Sigmoid colon (tissue), 7 donors: ENCODE measurements at regions of chr2 and their contacts with region 1.

Region 1: GRCh38 chr2:73926493-73927338 is at the start of gene DGUOK:
- DNase-seq: peak; percentile 99
- H3K4me3 ChIP-seq: peak within 1 kb of the TSS; percentile 63 to 76 (median 71)
- H3K27ac ChIP-seq: peak within 1 kb of the TSS; percentile 93 to 96 (median 94)
- H3K4me1 ChIP-seq: peaks cover 0 to 41% (median 32%) of the 10 kb centered on the region in 4 donors
- H3K27me3 ChIP-seq: no peaks in the 10 kb centered on the region
- CTCF ChIP-seq: no peak
- EP300 ChIP-seq: peak in 1 of 4 donors; percentile 73
- POLR2A ChIP-seq: peak; percentile 91 to 92
- total RNA-seq, gene DGUOK: 31.6 to 48.1 (median 39.3) TPM

Region 2: GRCh38 chr2:73337828-73338227 is 588.9 kb before region 1 on chr2:
- intact Hi-C with region 1: no loop called
- DNase-seq: no peak
- H3K4me3 ChIP-seq: no peak overlapping the region
- H3K27ac ChIP-seq: no peak overlapping the region
- H3K4me1 ChIP-seq: no peaks in the 10 kb centered on the region
- H3K27me3 ChIP-seq: no peaks in the 10 kb centered on the region
- CTCF ChIP-seq: no peak
- EP300 ChIP-seq: no peak
- POLR2A ChIP-seq: no peak

Region 3: GRCh38 chr2:73970850-73971471 is 44.2 kb after region 1 on chr2:
- intact Hi-C with region 1: no loop called
- DNase-seq: peak; percentile 79
- H3K4me3 ChIP-seq: no peak overlapping the region
- H3K27ac ChIP-seq: peak overlapping the region in 3 of 4 donors; percentile 29 to 56 (median 39)
- H3K4me1 ChIP-seq: peaks cover 0 to 18% (median 16%) of the 10 kb centered on the region in 4 donors
- H3K27me3 ChIP-seq: no peaks in the 10 kb centered on the region
- CTCF ChIP-seq: no peak
- EP300 ChIP-seq: no peak
- POLR2A ChIP-seq: no peak

Region 4: GRCh38 chr2:73985308-73986084 is 58.8 kb after region 1 on chr2:
- intact Hi-C with region 1: loop called (anchors 2 kb)
- DNase-seq: peak; percentile 72
- H3K4me3 ChIP-seq: peak overlapping the region; percentile 41 to 73 (median 63)
- H3K27ac ChIP-seq: peak overlapping the region; percentile 57 to 73 (median 65)
- H3K4me1 ChIP-seq: peaks cover 0 to 62% (median 50%) of the 10 kb centered on the region in 4 donors
- H3K27me3 ChIP-seq: peaks cover 0 to 2% (median 0%) of the 10 kb centered on the region in 3 donors
- CTCF ChIP-seq: no peak
- EP300 ChIP-seq: no peak
- POLR2A ChIP-seq: no peak

Region 5: DNA sequence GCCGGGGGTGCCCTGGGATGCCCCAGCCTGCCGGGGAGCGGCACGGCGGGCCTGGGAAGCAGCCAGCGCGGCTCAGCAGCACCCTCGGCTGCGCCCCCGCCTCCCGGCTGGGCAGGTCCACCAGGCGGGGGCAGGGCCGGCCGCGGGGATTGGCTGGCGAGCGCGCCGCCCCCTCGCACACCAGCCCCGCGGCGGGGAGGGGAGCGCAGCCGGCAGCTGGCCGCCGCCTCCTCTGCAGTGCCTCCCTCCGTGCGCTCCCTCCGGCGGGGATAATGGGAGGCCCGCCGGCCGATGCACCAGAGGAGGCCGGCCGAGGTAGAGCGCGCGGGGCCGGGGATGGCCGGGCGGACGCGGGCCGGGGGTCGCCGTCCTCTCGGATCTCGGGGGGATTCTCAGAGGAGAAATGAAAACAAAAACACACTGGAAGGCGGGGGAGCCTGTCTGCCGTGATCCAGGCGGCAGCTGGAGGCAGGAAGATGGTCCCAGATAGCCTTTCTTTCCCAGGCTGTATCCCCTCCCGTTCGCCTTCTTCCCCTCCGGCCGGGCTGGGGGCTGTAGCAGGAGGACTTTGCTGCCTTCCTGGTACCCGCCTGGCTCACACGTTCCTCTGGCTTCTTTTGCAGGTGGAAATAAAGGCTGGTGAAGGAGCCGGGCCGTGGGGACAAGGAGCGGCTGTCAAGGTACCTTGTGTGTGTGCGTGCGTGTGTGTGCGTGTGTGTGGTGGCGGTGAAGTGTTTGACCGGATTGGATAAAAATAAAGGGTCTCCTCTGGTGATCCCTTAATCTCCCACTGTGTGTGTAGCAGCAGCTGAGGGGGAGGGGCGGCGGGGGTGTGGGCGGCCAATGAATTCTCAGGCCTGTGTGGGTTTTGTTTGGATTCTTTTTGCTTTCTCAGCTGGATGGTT is 76.0 kb after region 1 on chr2:
- intact Hi-C with region 1: loop called (anchors 5 kb)
- DNase-seq: peak; percentile 90
- H3K4me3 ChIP-seq: peak overlapping the region; percentile 43 to 74 (median 56)
- H3K27ac ChIP-seq: peak overlapping the region; percentile 62 to 77 (median 68)
- H3K4me1 ChIP-seq: peaks cover 0 to 63% (median 51%) of the 10 kb centered on the region in 4 donors
- H3K27me3 ChIP-seq: no peaks in the 10 kb centered on the region
- CTCF ChIP-seq: peak in 1 of 4 experiments; percentile 7
- EP300 ChIP-seq: no peak
- POLR2A ChIP-seq: peak in 1 of 2 donors; percentile 22

Region 6: GRCh38 chr2:74025971-74026612 is 99.4 kb after region 1 on chr2:
- intact Hi-C with region 1: no loop called
- DNase-seq: no peak
- H3K4me3 ChIP-seq: no peak overlapping the region
- H3K27ac ChIP-seq: no peak overlapping the region
- H3K4me1 ChIP-seq: no peaks in the 10 kb centered on the region
- H3K27me3 ChIP-seq: no peaks in the 10 kb centered on the region
- CTCF ChIP-seq: no peak
- EP300 ChIP-seq: no peak
- POLR2A ChIP-seq: no peak

Region 7: DNA sequence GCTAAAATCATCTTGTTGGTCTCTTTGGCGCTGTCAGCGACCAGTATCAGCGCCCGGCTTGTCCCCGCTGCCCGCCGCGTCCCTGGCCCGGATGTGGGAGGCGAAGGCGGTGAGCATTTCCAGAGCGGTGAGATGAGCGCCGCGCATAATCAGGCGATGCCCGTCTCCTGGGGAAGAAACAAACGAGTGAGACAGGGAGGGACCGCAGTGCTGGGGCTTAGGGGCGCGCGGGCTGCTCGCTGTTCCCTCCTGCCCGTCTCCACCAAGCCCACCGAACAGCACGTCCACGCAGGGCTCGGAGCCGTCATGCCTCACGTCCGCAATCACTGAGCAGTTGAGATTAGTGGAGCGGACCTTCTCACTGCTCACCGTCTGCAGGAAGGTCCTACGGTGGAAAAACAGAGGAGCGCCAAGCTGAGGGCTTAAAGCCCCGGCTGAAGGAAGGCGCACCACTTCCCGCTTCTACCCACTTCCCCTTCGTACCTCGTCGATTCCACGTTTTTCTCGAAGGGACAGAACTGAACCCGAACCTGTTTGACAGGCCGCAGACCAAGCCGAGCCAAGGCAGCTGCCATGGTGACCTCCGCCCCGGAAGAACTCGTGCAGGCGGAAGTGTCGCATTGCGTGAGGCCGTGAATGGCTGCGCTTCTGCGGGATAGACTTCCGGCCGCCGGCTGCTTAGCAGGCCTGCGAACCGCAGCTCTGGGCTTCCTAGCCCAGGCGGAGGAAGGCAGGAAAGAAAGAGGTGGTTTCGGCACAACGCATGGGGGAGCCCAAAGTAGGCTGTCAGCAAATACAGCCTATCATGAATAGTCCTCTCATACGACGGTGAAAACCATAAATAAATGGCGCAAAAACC is 545.6 kb after region 1 on chr2 and contains the start of gene MRPL53:
- intact Hi-C with region 1: loop called (anchors 10 kb)
- DNase-seq: peak; percentile 96
- H3K4me3 ChIP-seq: peak within 1 kb of the TSS; percentile 43 to 71 (median 64)
- H3K27ac ChIP-seq: peak within 1 kb of the TSS; percentile 85 to 92 (median 88)
- H3K4me1 ChIP-seq: peaks cover 0 to 23% (median 21%) of the 10 kb centered on the region in 4 donors
- H3K27me3 ChIP-seq: no peaks in the 10 kb centered on the region
- CTCF ChIP-seq: no peak
- EP300 ChIP-seq: no peak
- POLR2A ChIP-seq: peak; percentile 82 to 85
- total RNA-seq, gene MRPL53: 10.2 to 77.1 (median 36.7) TPM